ENCODE measurements at regions of chr16 and their contacts with region 1.

Region 1: GRCh38 chr16:3880623-3881498 is at the start of gene CREBBP:
- DNase-seq: peak; percentile 88
- ATAC-seq: peak; percentile 85
- H3K4me3 Mint-ChIP-seq: peak within 1 kb of the TSS; percentile 91
- H3K27ac Mint-ChIP-seq: peak within 1 kb of the TSS; percentile 87
- H3K4me1 Mint-ChIP-seq: peaks cover 39% of the 10 kb centered on the region
- H3K27me3 Mint-ChIP-seq: peaks cover 5% of the 10 kb centered on the region
- CTCF ChIP-seq: no peak
- total RNA-seq, gene CREBBP: 110 and 131 TPM in 2 replicates

Region 2: DNA sequence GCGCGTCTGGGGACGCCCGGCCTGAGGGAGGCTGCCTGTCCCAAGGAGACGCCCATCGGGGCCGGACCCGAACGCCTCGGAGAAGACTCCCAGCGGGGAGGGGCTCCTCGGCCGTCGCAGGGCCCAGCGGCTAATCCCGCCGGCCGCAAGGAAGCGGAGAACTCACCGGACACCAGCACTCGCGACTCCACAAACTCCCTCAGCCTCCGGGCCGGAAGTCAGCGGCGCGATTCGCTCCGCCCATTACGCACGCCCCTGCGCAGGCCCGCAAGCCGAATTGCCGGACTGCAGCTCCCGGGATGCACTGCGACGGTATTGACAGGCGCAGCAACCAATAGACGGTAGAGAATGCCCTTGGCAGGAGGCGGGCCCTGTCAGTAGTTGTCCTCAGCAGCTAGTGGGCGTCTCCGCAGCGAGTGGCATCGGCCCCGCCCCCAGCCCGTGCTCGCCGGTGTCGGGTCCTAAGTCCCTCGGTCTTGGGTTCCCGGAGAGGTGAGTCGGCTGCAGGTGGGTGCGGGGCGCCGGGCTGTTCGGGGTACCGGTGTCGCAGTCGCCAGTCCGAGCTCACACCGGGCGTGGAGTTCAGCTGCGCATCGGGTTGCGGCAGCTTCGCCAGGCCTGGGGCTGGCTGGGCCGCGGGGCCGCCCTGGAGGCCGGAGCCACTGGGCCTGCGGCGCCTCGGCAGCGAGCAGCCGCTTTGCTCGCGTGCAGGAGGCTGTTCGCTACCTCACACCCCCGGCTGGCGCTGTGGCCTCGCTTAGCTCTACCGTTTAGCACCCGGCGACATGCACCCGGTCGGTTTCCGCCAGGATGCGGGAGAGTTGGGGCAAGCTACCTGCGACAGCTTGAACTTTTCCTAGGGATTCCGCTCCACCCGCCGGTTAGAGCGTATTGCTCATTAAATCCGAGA is 479.8 kb before region 1 on chr16 and contains the starts of genes ZNF174 and ZSCAN32:
- CTCF ChIA-PET with region 1: no interaction called
- POLR2A ChIA-PET with region 1: no interaction called
- intact Hi-C with region 1: loop called (anchors 1 kb)
- DNase-seq: peak; percentile 96
- ATAC-seq: peak; percentile 98
- H3K4me3 Mint-ChIP-seq: peak within 1 kb of the TSS; percentile 87
- H3K27ac Mint-ChIP-seq: peak within 1 kb of the TSS; percentile 76
- H3K4me1 Mint-ChIP-seq: peaks cover 45% of the 10 kb centered on the region
- H3K27me3 Mint-ChIP-seq: no peaks in the 10 kb centered on the region
- CTCF ChIP-seq: no peak
- total RNA-seq, gene ZNF174: 9.0 and 10.4 TPM in 2 replicates
- total RNA-seq, gene ZSCAN32: 21.6 and 21.7 TPM in 2 replicates

Region 3: GRCh38 chr16:3611146-3611975 is 269.5 kb before region 1 on chr16 and contains the start of gene SLX4:
- CTCF ChIA-PET with region 1: no interaction called
- POLR2A ChIA-PET with region 1: interaction called, 3 read pairs
- intact Hi-C with region 1: loop called (anchors 2 kb)
- DNase-seq: peak; percentile 95
- ATAC-seq: peak; percentile 85
- H3K4me3 Mint-ChIP-seq: peak within 1 kb of the TSS; percentile 100
- H3K27ac Mint-ChIP-seq: peak within 1 kb of the TSS; percentile 96
- H3K4me1 Mint-ChIP-seq: peaks cover 60% of the 10 kb centered on the region
- H3K27me3 Mint-ChIP-seq: no peaks in the 10 kb centered on the region
- CTCF ChIP-seq: no peak
- total RNA-seq, gene SLX4: 11.4 and 13.0 TPM in 2 replicates

Region 4: DNA sequence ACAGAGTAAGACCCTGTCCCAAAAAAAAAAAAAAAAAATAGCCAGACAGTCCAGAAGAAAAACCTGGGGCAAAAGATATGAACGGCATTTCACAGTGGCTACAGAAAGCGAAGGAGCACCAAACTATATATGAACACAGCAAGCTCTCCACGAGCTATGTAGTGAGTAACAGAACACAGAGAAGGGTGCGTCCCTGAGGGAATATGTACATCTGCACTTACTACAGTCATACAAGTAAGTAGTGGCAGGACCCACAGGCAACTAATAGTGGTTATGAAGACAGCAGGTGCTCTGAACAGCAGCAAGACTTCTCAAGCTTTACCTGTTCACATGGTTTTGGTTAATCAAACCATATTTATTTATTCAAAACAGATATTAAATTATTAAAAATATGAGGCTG is 179.3 kb before region 1 on chr16:
- CTCF ChIA-PET with region 1: no interaction called
- POLR2A ChIA-PET with region 1: interaction called, 10 read pairs
- intact Hi-C with region 1: no loop called
- DNase-seq: no peak
- ATAC-seq: no peak
- H3K4me3 Mint-ChIP-seq: no peak overlapping the region
- H3K27ac Mint-ChIP-seq: no peak overlapping the region
- H3K4me1 Mint-ChIP-seq: peaks cover 5% of the 10 kb centered on the region
- H3K27me3 Mint-ChIP-seq: no peaks in the 10 kb centered on the region
- CTCF ChIP-seq: no peak

Region 5: GRCh38 chr16:3797904-3798811 is 82.7 kb before region 1 on chr16:
- CTCF ChIA-PET with region 1: interaction called, 3 read pairs
- POLR2A ChIA-PET with region 1: no interaction called
- intact Hi-C with region 1: loop called (anchors 2 kb)
- DNase-seq: no peak
- ATAC-seq: no peak
- H3K4me3 Mint-ChIP-seq: peak overlapping the region; percentile 49
- H3K27ac Mint-ChIP-seq: peak overlapping the region; percentile 77
- H3K4me1 Mint-ChIP-seq: peaks cover 65% of the 10 kb centered on the region
- H3K27me3 Mint-ChIP-seq: no peaks in the 10 kb centered on the region
- CTCF ChIP-seq: no peak

Region 6: DNA sequence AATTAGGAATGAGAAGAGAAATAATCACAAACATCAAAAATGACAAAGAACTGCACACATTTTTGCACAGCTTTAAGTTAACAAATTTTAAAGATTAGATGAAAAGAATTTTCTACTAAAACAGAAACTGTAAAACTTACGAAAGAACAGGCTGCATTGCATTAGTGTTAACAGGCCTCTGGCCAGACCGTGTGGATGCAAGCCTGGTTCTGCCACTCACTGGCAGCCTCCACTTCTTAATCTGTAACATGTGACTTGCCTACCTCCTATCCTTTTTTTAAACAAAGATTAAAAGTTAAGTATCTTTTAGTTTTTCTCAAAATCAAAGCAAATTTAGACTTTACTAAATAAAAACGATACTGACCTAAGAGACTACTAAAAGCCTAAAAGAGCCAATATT is 37.9 kb before region 1 on chr16:
- CTCF ChIA-PET with region 1: no interaction called
- POLR2A ChIA-PET with region 1: interaction called, 8 read pairs
- intact Hi-C with region 1: loop called (anchors 5 kb)
- DNase-seq: no peak
- ATAC-seq: no peak
- H3K4me3 Mint-ChIP-seq: no peak overlapping the region
- H3K27ac Mint-ChIP-seq: no peak overlapping the region
- H3K4me1 Mint-ChIP-seq: peaks cover 57% of the 10 kb centered on the region
- H3K27me3 Mint-ChIP-seq: no peaks in the 10 kb centered on the region
- CTCF ChIP-seq: no peak

Region 7: GRCh38 chr16:4064950-4065352 is 184.1 kb after region 1 on chr16:
- CTCF ChIA-PET with region 1: no interaction called
- POLR2A ChIA-PET with region 1: no interaction called
- intact Hi-C with region 1: no loop called
- DNase-seq: no peak
- ATAC-seq: no peak
- H3K4me3 Mint-ChIP-seq: peak overlapping the region; percentile 73
- H3K27ac Mint-ChIP-seq: no peak overlapping the region
- H3K4me1 Mint-ChIP-seq: peaks cover 2% of the 10 kb centered on the region
- H3K27me3 Mint-ChIP-seq: peaks cover 3% of the 10 kb centered on the region
- CTCF ChIP-seq: no peak

Region 8: GRCh38 chr16:4077083-4077714 is 196.3 kb after region 1 on chr16:
- CTCF ChIA-PET with region 1: no interaction called
- POLR2A ChIA-PET with region 1: no interaction called
- intact Hi-C with region 1: no loop called
- DNase-seq: no peak
- ATAC-seq: no peak
- H3K4me3 Mint-ChIP-seq: no peak overlapping the region
- H3K27ac Mint-ChIP-seq: no peak overlapping the region
- H3K4me1 Mint-ChIP-seq: no peaks in the 10 kb centered on the region
- H3K27me3 Mint-ChIP-seq: peaks cover 2% of the 10 kb centered on the region
- CTCF ChIP-seq: no peak

Region 9: GRCh38 chr16:4253394-4254150 is 372.7 kb after region 1 on chr16:
- CTCF ChIA-PET with region 1: interaction called, 3 read pairs
- POLR2A ChIA-PET with region 1: interaction called, 6 read pairs
- intact Hi-C with region 1: loop called (anchors 1 kb)
- DNase-seq: peak; percentile 98
- ATAC-seq: peak; percentile 96
- H3K4me3 Mint-ChIP-seq: peak overlapping the region; percentile 96
- H3K27ac Mint-ChIP-seq: peak overlapping the region; percentile 97
- H3K4me1 Mint-ChIP-seq: peaks cover 6% of the 10 kb centered on the region
- H3K27me3 Mint-ChIP-seq: no peaks in the 10 kb centered on the region
- CTCF ChIP-seq: no peak